ENCODE measurements at regions of chr5 and their contacts with region 1.

Region 1: DNA sequence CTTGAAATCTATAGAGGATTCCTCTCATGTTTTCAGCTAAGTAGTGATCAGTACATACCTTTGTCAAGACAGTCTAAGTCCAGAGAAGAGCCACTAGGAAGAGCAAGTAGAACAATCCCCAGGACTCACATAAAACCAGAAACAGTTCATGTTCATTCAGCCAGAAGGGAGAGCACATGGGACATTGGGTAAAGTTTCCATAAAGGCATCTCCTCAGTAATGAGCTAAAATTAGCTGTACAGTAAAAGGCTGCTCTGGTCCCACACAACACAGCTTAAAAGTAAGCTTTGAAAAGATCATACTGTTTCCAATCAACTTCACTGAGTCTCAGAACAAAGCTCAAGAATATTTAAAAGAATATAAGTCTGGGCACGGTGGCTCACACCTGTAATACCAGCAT is 32.4 kb downstream of the HOMER1 start:
- DNase-seq: no peak
- ATAC-seq: peak; percentile 83 to 93 (median 90)
- H3K4me3 ChIP-seq: peak overlapping the region in 9 of 10 donors; percentile 12 to 46 (median 38)
- H3K27ac ChIP-seq: peak overlapping the region; percentile 66 to 93 (median 86)
- H3K4me1 ChIP-seq: peaks cover 0 to 19% (median 3%) of the 10 kb centered on the region in 9 donors
- H3K27me3 ChIP-seq: no peaks in the 10 kb centered on the region
- CTCF ChIP-seq: no peak

Region 2: DNA sequence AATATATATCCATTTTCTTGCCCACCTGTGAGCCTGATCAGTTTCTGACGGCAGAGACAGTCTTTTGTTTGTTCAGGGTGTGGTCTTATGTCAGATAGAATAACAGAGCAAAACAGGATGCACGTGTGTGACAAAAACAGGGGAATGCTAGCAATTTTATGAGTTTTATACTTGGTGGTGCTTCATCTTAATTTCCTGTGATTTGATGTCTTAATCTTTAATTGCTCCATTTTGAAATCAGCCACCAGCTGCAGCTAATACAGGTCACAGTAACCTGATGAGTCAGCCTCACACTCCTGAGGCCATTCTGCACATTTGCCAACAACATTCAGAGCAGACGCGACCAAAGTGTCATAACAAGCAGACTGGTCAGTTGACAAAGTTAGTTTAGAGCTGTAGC is 287.9 kb before region 1 on chr5:
- intact Hi-C with region 1: no loop called
- DNase-seq: no peak
- ATAC-seq: peak in 1 of 8 donors; percentile 42
- H3K4me3 ChIP-seq: no peak overlapping the region
- H3K27ac ChIP-seq: no peak overlapping the region
- H3K4me1 ChIP-seq: no peaks in the 10 kb centered on the region
- H3K27me3 ChIP-seq: no peaks in the 10 kb centered on the region
- CTCF ChIP-seq: no peak

Region 3: GRCh38 chr5:79508354-79508753 is 26.8 kb after region 1 on chr5:
- intact Hi-C with region 1: loop called in 1 of 10 experiments (anchors 2 kb)
- DNase-seq: no peak
- ATAC-seq: peak in 5 of 8 donors; percentile 33 to 60 (median 45)
- H3K4me3 ChIP-seq: peak overlapping the region in 5 of 10 donors; percentile 4 to 92 (median 79)
- H3K27ac ChIP-seq: peak overlapping the region; percentile 9 to 99 (median 90)
- H3K4me1 ChIP-seq: peaks cover 0 to 24% (median 10%) of the 10 kb centered on the region in 9 donors
- H3K27me3 ChIP-seq: peaks cover 0 to 44% (median 22%) of the 10 kb centered on the region in 7 donors
- CTCF ChIP-seq: no peak

Measured in heart right ventricle (tissue), 16 donors.